ENCODE measurements at regions of chr11 and their contacts with region 1.

Region 1: GRCh38 chr11:72413914-72414628 is 20.3 kb downstream of the CLPB start:
- DNase-seq: peak; percentile 79 to 92 (median 82)
- ATAC-seq: peak; percentile 73 to 91 (median 82)
- H3K4me3 ChIP-seq: no peak overlapping the region
- H3K27ac ChIP-seq: peak overlapping the region in 1 of 12 donors; percentile 39
- H3K4me1 ChIP-seq: peaks cover 0 to 47% (median 13%) of the 10 kb centered on the region in 12 donors
- H3K27me3 ChIP-seq: no peaks in the 10 kb centered on the region
- CTCF ChIP-seq: peak; percentile 77 to 94 (median 88)
- POLR2A ChIP-seq: no peak

Region 2: GRCh38 chr11:72222907-72223614 is 191.0 kb before region 1 on chr11:
- intact Hi-C with region 1: loop called in 2 of 10 experiments (anchors 5 to 10 kb)
- DNase-seq: peak; percentile 96 to 98 (median 97)
- ATAC-seq: peak; percentile 89 to 96 (median 92)
- H3K4me3 ChIP-seq: peak overlapping the region; percentile 58 to 99 (median 88)
- H3K27ac ChIP-seq: peak overlapping the region; percentile 90 to 100 (median 99)
- H3K4me1 ChIP-seq: peaks cover 0 to 52% (median 17%) of the 10 kb centered on the region in 12 donors
- H3K27me3 ChIP-seq: peaks cover 0 to 4% (median 0%) of the 10 kb centered on the region in 9 donors
- CTCF ChIP-seq: peak; percentile 17 to 68 (median 46)
- POLR2A ChIP-seq: peak; percentile 86 to 91

Region 3: GRCh38 chr11:72293910-72294615 is 120.0 kb before region 1 on chr11:
- intact Hi-C with region 1: loop called in 5 of 10 experiments (anchors 5 to 10 kb)
- DNase-seq: no peak
- ATAC-seq: peak in 2 of 4 donors; percentile 13 to 28
- H3K4me3 ChIP-seq: no peak overlapping the region
- H3K27ac ChIP-seq: no peak overlapping the region
- H3K4me1 ChIP-seq: no peaks in the 10 kb centered on the region
- H3K27me3 ChIP-seq: no peaks in the 10 kb centered on the region
- CTCF ChIP-seq: no peak
- POLR2A ChIP-seq: no peak

Region 4: DNA sequence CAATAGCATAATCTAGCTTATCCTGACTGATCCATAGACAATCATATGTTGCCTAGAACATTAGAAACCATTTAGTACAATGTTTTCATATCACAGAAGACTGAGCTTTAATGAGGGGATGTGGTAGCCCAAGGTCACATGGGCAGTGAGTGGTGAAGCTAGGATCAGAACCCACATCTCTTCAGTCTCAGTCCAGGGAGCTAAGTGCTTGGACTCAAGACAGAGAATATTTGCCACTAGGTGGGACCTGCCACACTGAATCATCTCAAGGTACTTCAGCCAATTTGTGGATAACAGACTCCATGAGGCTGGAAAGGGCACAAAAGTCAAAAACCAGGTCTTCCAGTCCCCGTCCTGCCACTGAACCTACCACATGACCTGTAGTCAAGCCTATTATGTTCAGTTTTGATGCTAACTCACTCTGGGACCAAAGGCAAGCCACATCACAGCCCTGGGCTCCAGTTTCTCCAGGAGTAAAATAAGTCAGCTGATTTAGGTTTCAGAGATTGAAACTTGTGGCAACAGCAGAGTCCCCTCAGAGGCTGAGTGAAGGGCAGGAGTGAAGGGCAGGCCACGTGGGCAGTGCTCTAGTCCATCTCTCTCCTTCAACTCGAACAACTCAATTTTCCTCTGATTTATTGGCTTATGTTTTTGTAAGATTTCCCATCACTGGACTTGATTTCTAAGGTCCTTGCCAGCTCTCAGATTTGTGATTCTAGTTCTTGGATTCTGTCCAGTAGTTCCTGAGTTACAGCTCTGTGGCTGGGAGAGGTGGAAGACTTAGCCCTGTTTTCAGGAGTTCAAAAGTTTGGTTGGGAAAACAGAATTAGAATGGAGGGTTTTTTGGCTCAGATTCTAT is 85.5 kb before region 1 on chr11:
- intact Hi-C with region 1: loop called in 1 of 10 experiments (anchors 10 kb)
- DNase-seq: no peak
- ATAC-seq: peak in 2 of 4 donors; percentile 29
- H3K4me3 ChIP-seq: no peak overlapping the region
- H3K27ac ChIP-seq: peak overlapping the region in 4 of 12 donors; percentile 1 to 55 (median 22)
- H3K4me1 ChIP-seq: peaks cover 0 to 40% (median 13%) of the 10 kb centered on the region in 12 donors
- H3K27me3 ChIP-seq: no peaks in the 10 kb centered on the region
- CTCF ChIP-seq: no peak
- POLR2A ChIP-seq: no peak

Region 5: GRCh38 chr11:72446902-72447769 is 33.1 kb after region 1 on chr11:
- intact Hi-C with region 1: loop called in 1 of 10 experiments (anchors 1 kb)
- DNase-seq: no peak
- ATAC-seq: peak in 3 of 4 donors; percentile 44 to 61 (median 55)
- H3K4me3 ChIP-seq: no peak overlapping the region
- H3K27ac ChIP-seq: no peak overlapping the region
- H3K4me1 ChIP-seq: peaks cover 0 to 6% (median 0%) of the 10 kb centered on the region in 12 donors
- H3K27me3 ChIP-seq: no peaks in the 10 kb centered on the region
- CTCF ChIP-seq: peak; percentile 58 to 85 (median 67)
- POLR2A ChIP-seq: no peak